Activated naive CD4-positive, alpha-beta T cell treated with anti-CD3 and anti-CD28 coated beads for 36 hours (primary cell): ENCODE measurements at regions of chr1 and their contacts with region 1.

Region 1: GRCh38 chr1:46622344-46622743 is 5.7 kb upstream of the MOB3C start:
- DNase-seq: peak; percentile 30
- H3K4me3 Mint-ChIP-seq: no peak overlapping the region
- H3K27ac Mint-ChIP-seq: no peak overlapping the region
- H3K4me1 Mint-ChIP-seq: peaks cover under 1% of the 10 kb centered on the region
- H3K27me3 Mint-ChIP-seq: no peaks in the 10 kb centered on the region

Region 2: DNA sequence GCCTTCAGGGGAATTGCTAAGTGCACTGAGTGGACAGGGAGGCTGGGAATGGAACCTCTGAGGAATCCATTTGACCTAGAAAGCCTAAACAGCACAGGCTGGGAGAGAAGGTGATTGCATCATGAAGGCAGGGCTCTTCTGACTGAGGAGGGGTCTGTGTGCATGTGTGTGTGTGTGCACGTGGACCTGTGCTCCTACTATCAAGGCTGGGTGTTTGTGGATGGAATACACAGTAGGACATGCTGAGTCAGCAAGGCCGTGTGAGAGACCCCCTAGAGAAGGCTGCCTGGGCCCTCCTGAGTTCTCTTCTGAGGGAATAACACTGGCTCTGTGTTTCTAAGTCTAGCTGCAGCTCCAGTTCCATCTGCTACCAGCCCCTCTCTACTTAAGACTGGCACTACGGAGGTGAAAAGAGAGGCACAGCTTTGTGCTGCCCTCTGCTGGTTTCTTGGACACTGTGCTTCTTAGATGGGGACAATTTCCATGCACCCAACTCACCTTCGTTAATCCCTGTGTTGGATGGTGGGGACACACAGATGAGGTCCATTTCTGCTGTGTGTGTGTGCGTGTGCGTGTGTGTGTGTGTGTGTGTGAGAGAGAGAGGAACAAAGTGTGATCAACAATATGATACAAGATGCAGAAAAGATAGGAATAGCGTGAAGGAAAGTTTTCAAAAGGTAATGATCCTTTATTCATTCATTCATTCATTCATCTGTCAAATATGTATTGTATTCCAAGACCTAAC is 102.8 kb after region 1 on chr1:
- CTCF ChIA-PET with region 1: interaction called, 13 read pairs
- intact Hi-C with region 1: loop called (anchors 1 kb)
- DNase-seq: peak; percentile 83
- H3K4me3 Mint-ChIP-seq: no peak overlapping the region
- H3K27ac Mint-ChIP-seq: no peak overlapping the region
- H3K4me1 Mint-ChIP-seq: no peaks in the 10 kb centered on the region
- H3K27me3 Mint-ChIP-seq: peaks cover 23% of the 10 kb centered on the region